GM18951 (cell line): ENCODE measurements at regions of chr1 and their contacts with region 1.

Region 1: DNA sequence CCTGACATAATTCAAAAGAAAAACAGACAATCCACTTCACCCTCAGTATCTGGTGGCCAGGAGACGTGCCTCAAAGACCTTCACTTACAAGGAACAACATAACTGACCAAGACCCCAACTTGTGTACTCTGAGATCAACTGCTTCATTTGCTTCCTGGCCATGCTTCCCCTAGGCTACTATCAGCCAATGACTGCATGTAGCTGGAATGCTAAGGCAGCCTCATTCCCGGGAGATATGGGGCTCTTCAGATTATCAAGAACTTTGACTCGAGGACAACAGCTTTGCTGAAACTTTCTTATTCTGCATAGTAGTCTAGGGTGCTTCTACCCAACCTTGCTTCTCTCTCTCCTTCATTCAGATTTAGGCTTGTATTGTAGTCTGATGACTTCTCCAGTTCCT is 11.7 kb upstream of the UCK2 start:
- POLR2A ChIP-seq: no peak

Region 2: GRCh38 chr1:165712764-165713163 is 103.0 kb before region 1 on chr1:
- in situ Hi-C with region 1: loop called (anchors 5 kb)
- POLR2A ChIP-seq: no peak

Region 3: GRCh38 chr1:165753934-165754333 is 61.8 kb before region 1 on chr1:
- in situ Hi-C with region 1: no loop called
- POLR2A ChIP-seq: no peak